Pancreas (tissue), 10 donors: ENCODE measurements at regions of chr9 and their contacts with region 1.

Region 1: GRCh38 chr9:37913480-37914153 is 9.7 kb upstream of the SLC25A51 start:
- DNase-seq: peak; percentile 60 to 90 (median 80)
- ATAC-seq: peak; percentile 59 to 92 (median 86)
- H3K4me3 ChIP-seq: no peak overlapping the region
- H3K27ac ChIP-seq: no peak overlapping the region
- H3K4me1 ChIP-seq: peaks cover 0 to 6% (median 2%) of the 10 kb centered on the region in 3 donors
- H3K27me3 ChIP-seq: no peaks in the 10 kb centered on the region
- CTCF ChIP-seq: peak; percentile 95 to 99 (median 96)

Region 2: GRCh38 chr9:37753489-37754190 is 160.0 kb before region 1 on chr9 and contains the start of gene TRMT10B:
- intact Hi-C with region 1: no loop called
- DNase-seq: peak; percentile 56 to 83 (median 66)
- ATAC-seq: peak; percentile 95 to 98 (median 97)
- H3K4me3 ChIP-seq: peak within 1 kb of the TSS; percentile 63 to 74 (median 70)
- H3K27ac ChIP-seq: peak within 1 kb of the TSS; percentile 23 to 75 (median 68)
- H3K4me1 ChIP-seq: peaks cover 0 to 11% (median 4%) of the 10 kb centered on the region in 3 donors
- H3K27me3 ChIP-seq: no peaks in the 10 kb centered on the region
- CTCF ChIP-seq: no peak
- total RNA-seq, gene TRMT10B: 4.0 to 7.3 (median 5.4) TPM

Region 3: DNA sequence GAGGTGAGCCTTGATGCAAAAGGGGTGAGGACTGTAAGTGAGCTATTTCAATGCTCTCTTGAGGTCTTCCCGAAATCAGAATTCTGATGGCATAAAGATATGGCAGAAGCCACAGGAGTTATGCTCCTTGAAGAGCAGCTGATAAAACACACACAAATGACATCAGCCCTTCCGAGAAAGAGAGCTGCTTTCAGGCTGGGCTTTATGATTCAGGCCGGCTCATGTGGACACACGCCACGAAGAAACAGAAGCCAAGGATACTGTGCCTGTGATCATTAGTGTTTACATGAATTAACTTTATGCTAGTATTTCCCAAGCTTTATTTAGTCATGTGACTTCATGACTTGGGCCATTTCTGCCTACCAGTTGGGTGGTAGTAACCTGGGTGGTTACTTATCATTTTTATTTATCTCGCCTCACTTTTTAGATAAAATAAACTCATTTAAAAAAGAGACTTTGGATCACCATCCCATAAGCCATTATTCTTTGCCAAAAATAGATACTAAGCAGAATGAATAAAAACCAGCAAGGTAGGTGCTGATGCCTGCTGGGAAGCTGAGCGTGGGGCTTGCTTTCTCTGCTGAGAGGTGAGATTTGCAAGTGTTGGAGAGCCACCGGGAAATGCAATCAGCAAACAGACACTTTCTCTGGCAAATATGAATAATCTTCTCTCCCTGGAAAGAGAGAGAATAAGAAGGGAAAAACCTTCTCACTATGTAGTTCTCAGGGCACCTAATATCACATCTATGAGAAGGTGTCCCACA is 63.3 kb after region 1 on chr9:
- intact Hi-C with region 1: loop called in 1 of 3 experiments (anchors 10 kb)
- DNase-seq: peak in 5 of 6 donors; percentile 53 to 73 (median 61)
- ATAC-seq: peak; percentile 86 to 93 (median 88)
- H3K4me3 ChIP-seq: no peak overlapping the region
- H3K27ac ChIP-seq: peak overlapping the region in 3 of 4 donors; percentile 2 to 74 (median 60)
- H3K4me1 ChIP-seq: peaks cover 5 to 30% (median 25%) of the 10 kb centered on the region in 3 donors
- H3K27me3 ChIP-seq: no peaks in the 10 kb centered on the region
- CTCF ChIP-seq: no peak

Region 4: DNA sequence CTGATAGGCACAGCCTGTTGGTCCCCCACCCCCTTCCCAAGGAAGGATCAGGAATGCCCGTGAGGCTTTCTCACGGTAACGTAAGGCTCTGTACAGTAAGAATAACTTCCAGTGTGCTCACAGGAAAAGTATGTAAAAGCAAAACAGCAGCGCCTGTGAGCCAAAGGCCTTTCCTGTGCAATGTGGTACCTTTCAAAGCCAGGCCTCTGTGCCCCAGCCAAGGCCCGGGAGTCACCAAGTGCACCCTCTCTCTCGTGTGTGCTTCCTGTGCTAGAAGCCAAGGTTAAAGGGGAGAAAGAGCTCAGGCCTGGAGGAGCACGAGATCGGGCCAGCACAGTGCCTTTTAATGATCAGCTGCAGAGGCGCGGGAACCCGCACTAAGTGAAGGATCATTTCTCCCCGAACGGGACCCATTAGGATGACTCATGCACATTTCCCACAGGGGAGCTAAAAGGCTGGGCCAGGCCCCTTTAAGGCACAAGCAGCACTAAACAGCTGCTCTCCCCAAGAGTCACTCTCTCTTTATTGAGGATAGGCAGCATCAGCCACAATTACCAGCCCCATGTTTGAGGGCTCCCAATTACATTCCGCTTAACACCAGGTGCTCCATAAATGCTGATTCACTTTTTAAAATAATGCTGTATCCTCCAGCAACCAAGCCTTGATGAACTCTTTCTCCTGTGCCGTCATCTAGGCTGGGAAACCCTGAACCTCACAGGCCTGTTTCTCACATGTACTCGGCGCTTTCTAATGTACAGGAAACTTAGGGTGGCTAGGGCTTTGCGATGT is 112.6 kb after region 1 on chr9:
- intact Hi-C with region 1: loop called in 1 of 3 experiments (anchors 10 kb)
- DNase-seq: peak in 1 of 6 donors; percentile 31
- ATAC-seq: peak in 3 of 4 donors; percentile 4 to 42 (median 7)
- H3K4me3 ChIP-seq: no peak overlapping the region
- H3K27ac ChIP-seq: peak overlapping the region; percentile 18 to 51 (median 40)
- H3K4me1 ChIP-seq: peaks cover 14 to 45% (median 28%) of the 10 kb centered on the region in 3 donors
- H3K27me3 ChIP-seq: no peaks in the 10 kb centered on the region
- CTCF ChIP-seq: no peak

Region 5: DNA sequence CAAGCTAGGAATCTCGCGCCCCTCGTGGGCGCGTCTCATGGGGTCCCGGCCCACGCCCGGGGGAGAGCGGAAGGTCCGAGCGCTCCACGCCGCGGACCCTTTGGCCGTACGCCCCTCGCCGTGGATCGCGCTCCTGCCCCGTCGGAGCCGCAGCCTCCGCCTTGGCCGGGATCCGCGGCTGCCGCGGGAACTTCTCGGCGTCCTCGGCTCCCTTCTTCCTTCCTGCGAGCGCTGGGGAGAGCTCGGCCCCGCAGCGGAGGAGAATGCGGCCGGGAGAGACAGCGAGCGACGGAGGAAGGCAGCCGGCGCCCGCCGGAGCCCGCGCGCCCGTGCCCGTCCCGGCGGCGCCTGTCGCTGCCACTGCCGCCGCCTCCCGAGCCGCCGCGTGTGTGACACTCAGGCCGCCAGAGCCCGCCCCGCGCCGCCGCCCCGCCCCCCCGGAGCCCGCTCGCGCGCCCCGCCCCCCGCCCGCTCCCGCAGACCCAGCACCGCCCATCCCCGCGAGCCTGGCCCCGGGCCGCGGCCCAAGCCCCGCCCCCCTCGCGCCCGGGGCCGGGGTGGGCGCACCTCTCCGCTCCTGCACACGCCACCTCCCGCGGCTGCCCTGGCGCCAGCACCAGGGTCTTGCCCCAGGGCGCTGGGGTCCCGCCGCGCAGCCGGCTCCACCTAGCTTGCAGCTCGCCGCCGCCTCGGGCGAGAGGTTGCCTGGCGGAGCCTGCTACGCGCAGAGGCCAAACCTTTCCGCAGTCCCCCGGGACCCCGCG is 155.4 kb after region 1 on chr9 and contains the start of gene SHB:
- intact Hi-C with region 1: loop called in 2 of 3 experiments (anchors 5 kb)
- DNase-seq: peak; percentile 79 to 94 (median 88)
- ATAC-seq: peak; percentile 67 to 74 (median 70)
- H3K4me3 ChIP-seq: peak within 1 kb of the TSS; percentile 43 to 99 (median 96)
- H3K27ac ChIP-seq: peak within 1 kb of the TSS; percentile 94 to 98 (median 97)
- H3K4me1 ChIP-seq: peaks cover 4 to 22% (median 5%) of the 10 kb centered on the region in 3 donors
- H3K27me3 ChIP-seq: no peaks in the 10 kb centered on the region
- CTCF ChIP-seq: no peak
- total RNA-seq, gene SHB: 13.9 to 24.2 (median 22.7) TPM

Region 6: DNA sequence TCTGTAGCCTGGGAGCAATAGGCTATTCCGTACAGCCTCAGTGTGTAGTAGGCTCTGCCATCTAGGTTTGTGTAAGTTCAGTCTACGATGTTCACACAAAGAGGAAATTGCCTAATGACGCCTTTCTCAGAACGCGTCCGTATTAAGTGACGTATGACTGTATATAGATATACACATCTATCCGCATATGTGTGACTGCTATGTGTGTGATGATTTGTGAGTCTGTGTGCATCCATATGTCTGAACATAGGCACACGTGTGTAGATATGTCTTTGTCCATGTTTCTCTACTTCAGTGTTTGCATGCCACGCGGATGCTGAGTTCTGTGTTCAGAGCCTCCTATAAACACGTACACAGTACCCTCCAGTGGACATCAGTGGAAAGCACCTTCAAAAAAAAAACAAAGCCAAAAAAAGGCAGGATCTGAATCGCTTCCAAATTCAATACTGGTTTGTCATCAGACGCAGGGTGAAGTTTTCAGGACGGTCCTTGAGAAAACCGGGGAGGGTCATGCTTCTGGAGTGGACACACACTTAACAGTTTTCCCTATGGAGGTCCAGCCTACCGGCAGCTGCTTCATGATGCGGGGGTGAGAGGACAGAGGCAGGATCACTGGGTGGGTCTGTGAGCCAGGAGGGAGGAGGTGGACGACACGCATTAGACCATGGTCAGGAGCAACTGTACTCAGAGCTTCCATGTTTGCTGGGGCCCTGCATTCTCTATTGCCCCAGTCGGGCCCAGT is 449.4 kb after region 1 on chr9:
- intact Hi-C with region 1: loop called in 2 of 3 experiments (anchors 5 to 10 kb)
- DNase-seq: peak in 3 of 6 donors; percentile 44 to 63 (median 47)
- ATAC-seq: peak; percentile 86 to 97 (median 96)
- H3K4me3 ChIP-seq: no peak overlapping the region
- H3K27ac ChIP-seq: no peak overlapping the region
- H3K4me1 ChIP-seq: no peaks in the 10 kb centered on the region
- H3K27me3 ChIP-seq: no peaks in the 10 kb centered on the region
- CTCF ChIP-seq: peak; percentile 20 to 63 (median 50)